ENCODE measurements at regions of chr6 and their contacts with region 1.

Region 1: DNA sequence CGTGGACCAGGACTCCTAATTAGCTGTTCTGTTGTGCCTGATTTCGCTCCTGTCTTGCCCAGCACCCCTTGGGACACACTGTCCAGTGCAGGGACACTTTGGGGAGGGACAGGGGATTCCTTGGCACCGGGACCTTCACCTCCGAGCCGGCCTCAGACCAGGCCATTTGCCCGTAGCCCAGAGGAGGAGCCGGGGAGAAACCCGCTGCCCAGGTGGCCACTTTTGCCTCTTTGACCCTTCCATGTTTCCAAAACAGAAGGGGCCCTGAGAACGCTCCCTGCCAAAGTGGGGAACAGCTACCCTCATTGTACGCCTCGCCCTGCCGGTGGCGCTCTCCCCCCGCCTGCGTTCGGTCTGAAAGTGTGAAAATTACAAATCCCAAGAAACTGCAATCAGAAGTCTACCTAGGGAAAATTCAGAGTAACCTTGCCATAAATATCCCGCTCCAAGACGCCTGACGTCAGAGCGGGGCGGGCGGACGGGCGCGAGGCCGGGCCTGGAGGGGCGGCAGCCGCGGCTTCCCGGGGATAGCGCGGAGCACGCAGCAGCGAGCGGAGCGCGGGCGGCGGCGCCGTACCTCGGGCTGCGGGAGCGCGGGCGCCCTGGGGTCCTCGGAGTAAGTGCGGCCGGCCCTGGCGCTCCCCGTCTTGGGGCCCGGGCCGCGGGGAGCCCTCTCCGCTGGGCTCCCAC is at the start of gene DAAM2:
- DNase-seq: peak; percentile 87
- H3K4me3 ChIP-seq: peak within 1 kb of the TSS; percentile 64 to 86 (median 72)
- H3K27ac ChIP-seq: peak within 1 kb of the TSS; percentile 82 to 94 (median 87)
- H3K4me1 ChIP-seq: peaks cover 0 to 44% (median 31%) of the 10 kb centered on the region in 4 donors
- H3K27me3 ChIP-seq: no peaks in the 10 kb centered on the region
- CTCF ChIP-seq: no peak
- EP300 ChIP-seq: no peak
- POLR2A ChIP-seq: no peak
- total RNA-seq, gene DAAM2: 23.2 to 53.2 (median 35.4) TPM

Region 2: DNA sequence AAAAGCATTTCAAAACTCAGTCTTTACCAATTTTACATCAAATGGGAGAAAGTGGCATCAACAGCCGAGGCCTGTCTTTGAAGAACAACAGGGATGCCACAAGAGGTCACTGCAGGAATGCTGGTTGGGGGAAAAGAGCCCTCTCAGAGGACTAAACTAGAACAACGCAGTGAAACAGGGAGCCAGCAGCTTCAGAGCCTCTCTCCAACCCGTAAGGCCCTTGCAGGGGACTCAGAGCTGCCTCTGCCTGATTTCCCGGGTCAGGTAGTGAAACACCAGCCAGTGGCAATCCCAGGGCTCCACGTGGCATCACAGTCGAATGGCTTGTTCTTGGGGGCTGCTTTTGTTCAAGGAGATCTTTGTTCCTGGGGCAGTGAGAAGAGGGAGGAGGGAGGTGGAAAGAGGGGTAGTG is 414.4 kb before region 1 on chr6:
- intact Hi-C with region 1: loop called (anchors 5 kb)
- DNase-seq: peak; percentile 85
- H3K4me3 ChIP-seq: no peak overlapping the region
- H3K27ac ChIP-seq: peak overlapping the region in 1 of 4 donors; percentile 22
- H3K4me1 ChIP-seq: peaks cover 0 to 4% (median 0%) of the 10 kb centered on the region in 4 donors
- H3K27me3 ChIP-seq: no peaks in the 10 kb centered on the region
- CTCF ChIP-seq: peak; percentile 53 to 63 (median 58)
- EP300 ChIP-seq: no peak
- POLR2A ChIP-seq: no peak

Region 3: DNA sequence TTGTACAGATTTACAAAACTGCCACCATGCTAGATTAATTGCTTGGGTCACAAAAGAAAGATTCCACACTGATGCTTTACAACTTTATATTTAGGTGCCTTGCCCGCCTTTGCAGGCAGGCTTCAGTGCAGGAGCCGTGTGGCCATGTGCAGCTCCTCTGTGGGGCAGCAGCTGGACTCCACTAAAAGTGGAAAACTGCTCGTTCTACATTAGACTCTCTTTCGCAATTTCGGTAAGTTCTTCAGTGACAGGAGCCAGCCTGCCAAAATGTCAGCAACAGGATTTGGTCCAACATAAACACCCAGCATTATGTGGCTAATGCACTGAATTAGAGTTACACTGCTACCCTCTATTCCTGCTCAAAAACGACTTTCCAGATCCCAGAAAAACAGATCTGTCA is 295.1 kb before region 1 on chr6:
- intact Hi-C with region 1: no loop called
- DNase-seq: peak; percentile 86
- H3K4me3 ChIP-seq: no peak overlapping the region
- H3K27ac ChIP-seq: peak overlapping the region in 3 of 4 donors; percentile 10 to 55 (median 13)
- H3K4me1 ChIP-seq: peaks cover 0 to 22% (median 10%) of the 10 kb centered on the region in 4 donors
- H3K27me3 ChIP-seq: no peaks in the 10 kb centered on the region
- CTCF ChIP-seq: no peak
- EP300 ChIP-seq: no peak
- POLR2A ChIP-seq: no peak

Region 4: DNA sequence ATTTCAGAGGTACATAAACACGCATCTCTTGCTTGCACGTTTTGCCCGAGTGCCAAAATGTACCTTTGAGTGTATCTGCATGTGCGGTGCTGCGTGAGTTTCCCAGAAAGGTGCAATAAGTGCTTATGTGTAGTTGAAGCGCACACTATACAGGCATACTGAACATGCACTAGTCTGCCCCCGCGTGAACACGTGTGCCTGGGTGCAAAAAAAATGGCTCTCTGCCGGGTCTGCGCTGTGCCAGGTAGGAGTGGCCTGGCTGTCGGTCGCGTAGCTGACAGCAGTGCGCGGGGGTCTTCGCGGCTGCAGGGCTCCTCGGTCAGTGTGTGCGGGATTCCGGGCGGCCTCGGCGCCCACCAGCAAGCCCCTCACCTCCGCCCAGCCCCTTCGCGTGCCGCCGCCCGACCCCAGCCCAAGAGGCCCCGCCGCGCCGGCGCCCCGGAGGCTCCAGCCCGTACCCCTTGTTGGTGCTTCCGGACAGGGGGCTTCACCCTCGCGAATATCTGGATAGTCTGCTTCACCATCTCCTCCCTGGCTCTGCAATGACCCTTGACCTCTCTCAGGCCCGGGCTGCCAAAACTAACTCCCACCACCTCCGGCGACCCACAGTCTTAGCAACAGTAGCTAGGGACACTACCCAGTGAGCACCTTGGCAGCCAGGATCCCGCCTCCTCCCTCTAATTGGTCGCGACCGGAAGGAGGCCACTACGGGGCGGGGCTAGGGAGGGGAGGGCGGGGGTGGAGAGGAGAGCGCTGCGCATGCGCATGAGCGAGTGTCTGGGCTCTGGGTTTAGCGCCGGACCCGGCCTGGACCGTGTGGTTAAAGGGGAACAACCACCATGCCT is 67.0 kb before region 1 on chr6 and contains the start of gene KIF6:
- intact Hi-C with region 1: loop called (anchors 2 kb)
- DNase-seq: peak; percentile 97
- H3K4me3 ChIP-seq: peak within 1 kb of the TSS; percentile 61 to 94 (median 78)
- H3K27ac ChIP-seq: peak within 1 kb of the TSS; percentile 55 to 74 (median 69)
- H3K4me1 ChIP-seq: peaks cover 0 to 10% (median 5%) of the 10 kb centered on the region in 4 donors
- H3K27me3 ChIP-seq: no peaks in the 10 kb centered on the region
- CTCF ChIP-seq: no peak
- EP300 ChIP-seq: no peak
- POLR2A ChIP-seq: no peak
- total RNA-seq, gene KIF6: 0.36 to 0.99 (median 0.55) TPM in 3 of 4 donors, not detected in the other

Region 5: DNA sequence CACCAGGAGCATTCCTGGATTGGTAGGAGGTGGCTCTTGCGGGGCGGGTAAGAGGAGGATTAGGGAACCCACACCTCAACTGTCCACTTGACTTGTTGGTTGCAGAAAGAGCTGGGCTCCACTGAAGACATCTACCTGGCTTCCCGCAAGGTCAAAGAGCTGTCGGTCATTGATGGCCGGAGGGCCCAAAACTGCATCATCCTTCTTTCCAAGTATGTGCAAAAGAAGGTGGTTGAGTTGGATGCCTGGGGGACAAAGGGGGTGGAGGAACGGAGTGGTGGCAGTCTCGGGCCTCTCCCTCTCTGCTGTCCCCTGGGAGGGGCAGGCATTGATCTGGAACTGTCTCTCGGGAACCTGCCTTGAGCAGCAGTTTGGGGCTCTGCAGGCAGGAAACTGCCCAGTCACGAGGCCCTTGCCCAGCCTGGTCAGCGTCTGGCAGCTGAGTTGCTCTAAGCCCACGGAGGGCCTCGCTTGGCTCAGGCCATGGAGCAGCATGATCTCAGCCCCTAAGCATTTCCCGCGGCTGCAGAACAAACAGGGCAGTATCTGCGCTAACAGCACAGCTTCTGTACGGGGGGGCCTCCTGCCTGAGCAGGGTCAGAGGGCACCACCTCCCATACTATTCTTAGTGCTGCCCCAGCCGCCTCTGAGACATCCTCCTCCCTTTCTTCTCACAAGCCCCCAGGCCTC is 95.5 kb after region 1 on chr6:
- intact Hi-C with region 1: loop called (anchors 5 kb)
- DNase-seq: peak; percentile 82
- H3K4me3 ChIP-seq: no peak overlapping the region
- H3K27ac ChIP-seq: peak overlapping the region; percentile 58 to 77 (median 68)
- H3K4me1 ChIP-seq: peaks cover 0 to 24% (median 21%) of the 10 kb centered on the region in 4 donors
- H3K27me3 ChIP-seq: no peaks in the 10 kb centered on the region
- CTCF ChIP-seq: no peak
- EP300 ChIP-seq: no peak
- POLR2A ChIP-seq: no peak